ENCODE measurements at regions of chr1 and their contacts with region 1.

Region 1: DNA sequence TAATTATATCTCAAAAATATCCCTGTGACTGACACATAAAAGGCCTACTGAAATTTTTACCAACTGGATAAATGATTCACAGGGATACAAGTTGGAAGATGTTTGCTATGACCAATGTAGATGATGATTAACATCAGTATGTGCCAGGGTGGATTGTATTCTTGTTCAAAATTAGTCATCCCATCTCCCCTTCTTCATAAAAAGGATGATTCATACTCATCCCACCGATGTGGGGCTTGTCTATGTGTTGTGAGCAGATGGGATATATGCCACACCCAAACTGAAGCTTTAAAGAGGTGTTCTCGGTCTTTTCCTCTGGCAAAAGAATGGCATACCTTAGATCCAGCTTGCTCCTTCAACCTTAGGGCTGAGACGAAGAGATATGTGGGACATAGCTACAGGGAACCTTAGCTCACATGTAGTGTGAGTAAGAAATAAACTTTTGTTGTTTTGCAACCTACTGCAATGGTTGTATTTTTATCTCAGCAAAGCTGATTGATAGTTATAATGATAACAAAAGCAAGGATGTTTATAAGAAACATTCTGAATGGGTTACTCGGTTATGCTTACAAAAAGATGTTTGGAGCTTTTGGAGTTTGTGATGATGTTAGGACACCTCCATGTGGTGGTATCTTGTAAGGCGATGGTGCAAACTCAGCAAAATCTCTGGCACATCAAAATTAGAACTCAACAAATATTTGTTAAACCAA is 29.4 kb downstream of the SPATA17 start:
- DNase-seq: peak; percentile 19
- CTCF ChIP-seq: peak; percentile 44

Region 2: GRCh38 chr1:217048104-217048721 is 612.3 kb before region 1 on chr1:
- CTCF ChIA-PET with region 1: interaction called, 15 read pairs
- POLR2A ChIA-PET with region 1: no interaction called
- DNase-seq: peak; percentile 23
- CTCF ChIP-seq: peak; percentile 23

Region 3: DNA sequence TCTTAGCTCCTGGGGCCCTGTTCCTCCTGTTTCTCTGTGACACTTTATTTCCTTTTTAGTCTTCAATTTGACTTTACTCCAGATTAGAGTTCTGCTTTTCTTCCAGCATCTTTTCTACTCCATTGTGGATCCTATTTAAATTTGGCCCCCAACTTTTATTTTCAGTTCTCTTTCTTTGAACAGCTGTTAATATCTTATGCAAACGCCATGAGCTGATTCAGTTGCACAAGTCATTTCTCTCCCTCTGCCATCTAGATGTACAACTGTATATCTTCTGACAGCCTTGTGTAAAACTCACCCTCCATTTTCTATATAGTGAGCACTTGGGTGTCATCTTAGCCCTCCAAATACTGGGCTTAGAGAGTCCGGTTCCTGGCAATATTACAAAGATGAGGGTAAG is 12.9 kb after region 1 on chr1:
- CTCF ChIA-PET with region 1: interaction called, 10 read pairs
- POLR2A ChIA-PET with region 1: no interaction called
- DNase-seq: no peak
- CTCF ChIP-seq: no peak

Region 4: DNA sequence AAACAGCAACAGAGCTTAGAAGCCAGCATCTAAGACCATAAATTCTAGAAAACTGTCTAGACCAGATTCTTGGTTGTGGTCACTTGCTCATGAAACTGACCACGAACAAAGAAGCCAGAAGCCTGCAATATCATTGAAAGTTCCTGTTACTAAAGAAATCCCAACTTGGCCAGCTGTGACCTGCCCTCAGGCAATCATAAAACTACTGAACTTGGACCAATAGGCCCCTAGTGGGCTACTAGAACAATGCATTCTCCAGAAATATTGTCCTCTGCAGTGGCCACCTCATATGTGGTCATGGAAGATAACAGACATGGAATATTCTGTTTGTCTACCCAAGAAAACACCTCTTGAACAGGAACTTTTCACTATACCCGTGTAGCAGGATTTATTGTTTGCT is 58.4 kb after region 1 on chr1:
- CTCF ChIA-PET with region 1: no interaction called
- POLR2A ChIA-PET with region 1: no interaction called
- DNase-seq: no peak
- CTCF ChIP-seq: no peak

Measured in GM10248 (cell line).